GM10248 (cell line): ENCODE measurements at regions of chr1 and their contacts with region 1.

Region 1: DNA sequence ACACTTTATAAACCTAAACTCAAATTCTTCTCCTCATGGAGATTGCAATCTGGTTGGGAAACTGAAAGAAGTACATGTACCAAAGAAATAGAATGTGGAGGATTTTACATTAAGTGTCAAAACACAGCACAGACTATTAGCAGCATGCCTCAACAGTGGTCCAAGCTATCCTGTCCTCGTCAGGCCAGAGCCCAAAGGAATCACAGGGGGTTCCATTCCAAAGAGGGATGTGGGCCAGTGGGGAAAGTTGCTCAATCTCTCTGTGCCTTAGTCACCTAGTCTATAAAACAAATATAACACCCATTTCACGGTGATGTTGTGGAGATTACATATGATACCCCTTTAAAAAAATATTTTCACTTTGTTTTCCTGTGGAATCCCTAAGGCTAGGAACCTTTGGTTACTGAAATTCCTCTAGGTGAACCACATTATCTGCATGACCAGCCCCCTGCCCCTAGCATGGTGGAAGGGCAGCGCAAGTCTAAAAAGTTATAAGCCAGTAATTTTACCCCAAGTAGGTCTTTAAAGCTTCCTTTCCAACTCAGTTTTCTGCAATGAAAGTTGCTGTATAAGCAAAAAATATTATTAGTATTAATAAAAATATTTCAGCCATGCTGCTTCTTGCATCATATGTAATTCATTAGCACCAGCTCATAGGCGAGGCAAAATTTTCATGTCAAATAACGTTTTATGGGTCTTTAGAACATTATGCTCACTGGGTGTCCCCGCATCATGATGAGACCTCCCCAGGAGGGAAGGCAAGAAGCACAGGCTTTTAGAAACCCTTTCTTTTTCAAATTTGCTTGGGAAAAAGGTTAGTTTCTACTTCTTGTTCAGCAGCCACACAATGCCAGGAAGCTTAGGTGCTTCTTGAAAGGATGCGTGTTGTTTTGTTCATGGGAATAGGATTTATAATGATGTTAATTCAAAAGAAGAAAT is 548.8 kb upstream of the PKN2 start:
- DNase-seq: no peak
- CTCF ChIP-seq: no peak

Region 2: GRCh38 chr1:88150330-88150729 is 15.1 kb after region 1 on chr1:
- CTCF ChIA-PET with region 1: interaction called, 13 read pairs
- POLR2A ChIA-PET with region 1: no interaction called
- DNase-seq: no peak
- CTCF ChIP-seq: no peak